ENCODE measurements at regions of chr15 and their contacts with region 1.

Region 1: GRCh38 chr15:101258238-101259144 is 6.6 kb upstream of the CHSY1 start:
- DNase-seq: peak in 1 of 2 donors; percentile 45
- ATAC-seq: peak; percentile 67 to 82
- H3K4me3 ChIP-seq: no peak overlapping the region
- H3K27ac ChIP-seq: no peak overlapping the region
- H3K4me1 ChIP-seq: peaks cover 0 to 3% of the 10 kb centered on the region in 2 donors
- H3K27me3 ChIP-seq: no peaks in the 10 kb centered on the region
- CTCF ChIP-seq: peak; percentile 73 to 86 (median 79)
- POLR2A ChIP-seq: no peak

Region 2: DNA sequence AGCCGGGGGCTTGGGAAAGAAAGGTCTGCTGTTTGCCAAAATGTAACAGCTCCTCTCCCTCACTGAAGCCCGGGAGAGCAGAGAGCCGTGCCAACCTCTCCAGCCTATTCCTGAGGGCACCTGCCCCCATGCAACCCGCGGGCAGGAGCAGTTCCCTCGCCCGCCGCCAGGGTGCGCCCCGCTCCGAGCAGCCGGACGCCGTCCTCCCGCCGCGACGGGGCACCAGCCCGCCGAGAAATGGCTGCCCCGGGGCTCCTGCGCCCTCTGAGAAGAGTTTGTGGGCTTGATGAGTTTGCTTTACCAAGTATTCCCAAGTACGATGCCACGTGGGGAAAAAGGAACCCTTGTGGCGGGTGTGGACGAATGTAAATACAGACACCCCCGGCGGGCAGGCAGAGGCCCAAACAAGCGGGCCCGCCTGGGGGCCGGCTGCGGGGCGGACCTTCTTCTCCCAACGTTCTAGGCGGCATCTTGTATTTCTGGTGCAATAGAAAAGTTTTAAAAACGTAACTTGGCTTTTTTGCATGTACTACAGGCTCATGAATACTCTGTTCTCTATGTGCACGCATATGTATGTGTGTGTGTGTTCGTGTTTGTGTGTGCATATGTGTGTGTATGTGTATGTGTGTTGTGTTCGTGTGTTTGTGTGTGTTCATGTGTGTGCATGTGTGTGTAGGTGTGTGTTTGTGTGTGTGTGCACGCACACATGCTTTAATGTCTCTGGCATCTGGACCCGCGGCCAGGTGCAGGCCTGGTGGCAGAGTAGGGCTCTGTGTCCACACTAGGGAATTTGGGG is 169.5 kb before region 1 on chr15:
- in situ Hi-C with region 1: loop called (anchors 5 kb)
- intact Hi-C with region 1: loop called (anchors 1 kb)
- DNase-seq: peak; percentile 35 to 46
- ATAC-seq: peak; percentile 79 to 92
- H3K4me3 ChIP-seq: peak overlapping the region in 1 of 4 donors; percentile 46
- H3K27ac ChIP-seq: no peak overlapping the region
- H3K4me1 ChIP-seq: peaks cover 0 to 8% of the 10 kb centered on the region in 2 donors
- H3K27me3 ChIP-seq: no peaks in the 10 kb centered on the region
- CTCF ChIP-seq: peak; percentile 93 to 99 (median 96)
- POLR2A ChIP-seq: no peak

Region 3: DNA sequence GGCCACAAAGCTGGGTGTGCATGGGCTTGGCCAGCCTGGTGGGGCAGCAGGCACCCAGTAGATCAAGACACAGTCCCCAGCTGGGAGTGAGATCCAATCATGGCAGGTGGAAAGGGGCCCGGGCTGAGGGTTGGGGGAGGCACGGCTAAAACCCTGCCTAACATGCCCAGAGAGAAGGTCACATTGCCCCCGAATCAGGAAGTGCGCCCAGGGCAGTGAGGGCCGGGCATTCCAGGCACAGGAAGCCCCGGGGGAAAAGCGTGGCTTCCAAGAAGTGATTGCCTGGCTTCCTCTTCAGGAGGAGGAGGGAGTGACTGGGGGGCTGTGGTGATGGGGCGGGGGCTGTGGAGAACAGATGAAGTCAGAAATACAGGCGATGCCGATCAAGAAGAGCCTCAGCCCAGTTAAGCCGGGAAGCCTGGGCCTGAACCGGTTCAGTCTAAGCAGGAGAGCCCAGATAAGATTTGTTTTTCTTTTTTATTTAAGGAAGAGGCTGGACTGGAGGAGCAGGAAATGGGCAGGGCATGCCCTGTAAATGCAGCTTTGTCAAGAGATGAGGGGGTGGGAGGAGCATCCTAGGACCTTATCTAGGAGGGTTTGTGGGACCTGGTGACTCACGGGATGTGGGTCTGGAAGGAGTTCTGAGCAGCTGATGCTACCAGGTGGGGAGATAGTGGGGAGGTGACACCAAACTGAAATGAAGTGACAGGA is 90.6 kb before region 1 on chr15:
- in situ Hi-C with region 1: no loop called
- intact Hi-C with region 1: no loop called
- DNase-seq: peak; percentile 46 to 50
- ATAC-seq: peak; percentile 55 to 65
- H3K4me3 ChIP-seq: peak overlapping the region in 1 of 4 donors; percentile 12
- H3K27ac ChIP-seq: peak overlapping the region; percentile 61 to 78 (median 73)
- H3K4me1 ChIP-seq: peaks cover 12 to 32% of the 10 kb centered on the region in 2 donors
- H3K27me3 ChIP-seq: no peaks in the 10 kb centered on the region
- CTCF ChIP-seq: no peak
- POLR2A ChIP-seq: peak in 1 of 2 donors; percentile 28